ENCODE measurements at regions of chr1 and their contacts with region 1.

Region 1: GRCh38 chr1:91645031-91645430 is 144.4 kb downstream of the CDC7 start:
- DNase-seq: no peak
- H3K4me3 ChIP-seq: no peak overlapping the region
- H3K27ac ChIP-seq: no peak overlapping the region
- H3K27me3 ChIP-seq: peaks cover 0 to 5% (median 0%) of the 10 kb centered on the region in 45 donors
- CTCF ChIP-seq: no peak

Region 2: GRCh38 chr1:91596474-91596873 is 48.6 kb before region 1 on chr1:
- intact Hi-C with region 1: loop called in 1 of 2 experiments (anchors 5 kb)
- DNase-seq: no peak
- H3K4me3 ChIP-seq: no peak overlapping the region
- H3K27ac ChIP-seq: no peak overlapping the region
- H3K27me3 ChIP-seq: peaks cover 0 to 9% (median 0%) of the 10 kb centered on the region in 45 donors
- CTCF ChIP-seq: no peak